ENCODE measurements at regions of chrX and their contacts with region 1.

Region 1: DNA sequence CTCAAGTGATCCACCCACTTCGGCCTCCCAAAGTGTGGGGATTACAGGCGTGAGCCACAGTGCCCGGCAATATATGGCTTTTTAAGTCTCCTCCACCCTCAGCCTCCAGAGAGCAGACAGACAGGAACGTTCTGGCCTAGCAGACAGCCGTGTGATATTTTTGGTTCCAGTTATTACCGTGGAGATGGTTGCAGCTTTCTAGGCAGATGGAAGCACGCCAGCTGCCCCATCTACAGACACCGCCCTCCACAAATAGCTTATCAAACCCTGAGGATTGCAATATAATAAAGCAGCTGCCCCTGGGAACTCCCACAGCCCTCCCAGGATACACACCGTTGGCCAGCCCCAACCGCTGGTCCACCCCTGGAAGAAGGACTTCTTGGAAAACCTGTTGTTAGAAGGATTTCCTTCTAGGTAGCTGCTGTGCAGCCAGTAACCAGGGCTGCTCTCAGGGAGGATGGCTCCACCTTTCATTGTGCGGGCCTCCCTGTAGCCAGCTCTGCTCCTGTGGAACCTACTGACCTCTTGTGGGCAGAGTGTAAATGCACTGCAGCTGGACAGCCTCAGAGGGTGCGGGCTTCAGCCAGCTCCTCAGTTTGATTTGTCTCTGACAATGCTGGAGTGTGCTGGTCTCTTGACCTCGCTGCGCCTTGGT is 44.0 kb downstream of the SLC25A5 start:
- DNase-seq: peak in 1 of 2 experiments; percentile 47
- H3K4me3 ChIP-seq: no peak overlapping the region
- H3K27ac ChIP-seq: no peak overlapping the region
- H3K4me1 ChIP-seq: no peaks in the 10 kb centered on the region
- H3K27me3 ChIP-seq: no peaks in the 10 kb centered on the region
- CTCF ChIP-seq: peak; percentile 71 to 83 (median 80)
- EP300 ChIP-seq: no peak
- POLR2A ChIP-seq: no peak
- RAD21 ChIP-seq: peak; percentile 81 to 88

Region 2: DNA sequence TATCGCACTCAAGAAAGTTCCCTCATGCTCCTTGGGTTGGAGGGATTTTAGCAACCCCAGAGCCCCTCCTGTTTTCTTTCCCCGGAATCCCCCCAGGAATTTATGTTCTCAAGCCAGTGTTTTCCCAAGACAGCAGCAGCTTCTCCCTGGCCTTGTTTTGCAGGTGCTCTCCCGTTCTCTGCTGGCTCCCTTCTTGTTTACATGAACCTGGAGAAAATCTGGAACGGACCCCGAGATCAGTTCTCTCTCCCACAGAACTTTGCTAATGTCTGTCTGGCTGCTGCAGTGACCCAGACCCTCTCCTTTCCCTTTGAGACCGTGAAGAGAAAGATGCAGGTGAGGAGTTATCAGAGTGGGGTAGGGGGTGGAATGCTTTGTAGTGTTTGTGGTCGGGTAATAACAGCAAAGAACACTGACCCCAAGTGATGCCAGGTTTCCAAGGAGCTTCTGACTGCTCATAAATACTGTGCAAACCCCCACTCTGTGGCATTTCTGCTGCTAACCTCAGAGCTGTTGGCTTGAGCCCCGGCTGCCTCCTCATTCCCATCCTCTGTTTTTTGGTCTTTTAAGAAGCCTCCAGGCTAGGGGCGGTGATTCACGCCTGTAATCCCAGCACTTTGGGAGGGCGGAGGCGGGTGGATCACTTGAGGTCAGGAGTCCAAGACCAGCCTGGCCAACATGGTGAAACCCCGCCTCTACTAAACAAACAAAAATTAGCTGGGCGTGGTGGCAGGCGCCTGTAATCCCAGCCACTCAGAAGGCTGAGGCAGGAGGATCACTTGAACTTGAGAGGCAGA is 102.0 kb before region 1 on chrX:
- CTCF ChIA-PET with region 1: no interaction called
- POLR2A ChIA-PET with region 1: no interaction called
- DNase-seq: no peak
- H3K4me3 ChIP-seq: no peak overlapping the region
- H3K27ac ChIP-seq: no peak overlapping the region
- H3K4me1 ChIP-seq: no peaks in the 10 kb centered on the region
- H3K27me3 ChIP-seq: no peaks in the 10 kb centered on the region
- CTCF ChIP-seq: no peak
- EP300 ChIP-seq: no peak
- POLR2A ChIP-seq: no peak
- RAD21 ChIP-seq: no peak

Region 3: GRCh38 chrX:119455264-119455663 is 57.0 kb before region 1 on chrX:
- CTCF ChIA-PET with region 1: no interaction called
- POLR2A ChIA-PET with region 1: no interaction called
- DNase-seq: no peak
- H3K4me3 ChIP-seq: no peak overlapping the region
- H3K27ac ChIP-seq: no peak overlapping the region
- H3K4me1 ChIP-seq: no peaks in the 10 kb centered on the region
- H3K27me3 ChIP-seq: no peaks in the 10 kb centered on the region
- CTCF ChIP-seq: no peak
- EP300 ChIP-seq: no peak
- POLR2A ChIP-seq: no peak
- RAD21 ChIP-seq: no peak

Region 4: DNA sequence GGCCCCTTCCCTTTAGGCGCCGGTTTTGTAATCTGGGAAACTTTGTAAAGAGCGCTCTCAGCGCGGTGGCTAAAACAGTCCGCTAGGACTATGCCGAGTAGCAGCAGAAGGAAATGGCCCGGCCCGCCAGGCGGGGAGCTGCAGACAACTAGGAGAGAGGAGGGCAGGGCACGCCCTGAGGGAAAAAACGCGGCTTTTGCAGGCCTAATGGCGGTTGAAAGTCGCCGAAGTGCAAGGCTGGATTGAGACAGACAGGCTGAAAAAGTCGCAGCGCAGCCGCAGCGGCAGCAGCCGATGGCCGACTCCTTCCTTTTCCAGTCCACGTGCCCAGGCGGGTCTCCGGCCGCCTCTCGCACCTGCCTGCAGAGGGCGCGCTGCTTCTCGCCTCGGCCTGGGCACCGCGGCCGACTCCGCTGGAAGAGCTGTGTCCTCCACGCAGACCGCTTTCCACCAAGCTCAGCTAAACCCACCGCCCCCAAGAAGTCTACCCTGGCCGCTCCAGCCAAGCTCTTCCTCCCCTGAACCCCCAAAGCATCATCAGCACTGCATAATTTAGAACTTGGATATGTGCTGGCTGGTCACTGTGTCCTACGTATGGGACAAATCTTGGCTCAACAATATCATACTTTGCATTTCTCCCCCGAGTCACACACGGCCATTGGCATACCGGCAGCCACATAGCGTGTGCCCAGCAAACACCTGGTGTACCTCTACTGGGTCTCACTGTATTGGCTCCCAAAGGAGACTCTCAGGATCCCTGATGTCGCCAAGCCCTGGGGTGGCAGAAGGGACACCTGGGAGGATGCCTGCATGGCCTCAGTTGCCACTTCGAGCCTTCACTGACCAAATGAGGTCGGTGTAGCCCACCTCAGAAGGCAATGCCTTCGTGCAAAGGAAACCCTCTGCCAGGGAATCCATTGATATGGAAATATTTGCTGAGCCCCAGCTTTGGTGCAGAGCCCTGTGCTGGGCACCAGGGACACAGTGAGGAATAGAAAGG is 29.5 kb before region 1 on chrX:
- CTCF ChIA-PET with region 1: interaction called, 34 read pairs
- POLR2A ChIA-PET with region 1: interaction called, 5 read pairs
- DNase-seq: peak in 1 of 2 experiments; percentile 78
- H3K4me3 ChIP-seq: peak overlapping the region; percentile 14 to 56 (median 26); a peak in 5 of 8 replicates
- H3K27ac ChIP-seq: no peak overlapping the region
- H3K4me1 ChIP-seq: no peaks in the 10 kb centered on the region; a peak in 1 of 7 replicates
- H3K27me3 ChIP-seq: peaks cover 0 to 10% (median 2%) of the 10 kb centered on the region in 4 experiments; a peak in 1 of 7 replicates
- CTCF ChIP-seq: peak; percentile 61 to 80 (median 74)
- EP300 ChIP-seq: no peak
- POLR2A ChIP-seq: peak in 1 of 2 experiments; percentile 43; a peak in 1 of 3 replicates
- RAD21 ChIP-seq: peak; percentile 30 to 44; a peak in 3 of 4 replicates

Region 5: DNA sequence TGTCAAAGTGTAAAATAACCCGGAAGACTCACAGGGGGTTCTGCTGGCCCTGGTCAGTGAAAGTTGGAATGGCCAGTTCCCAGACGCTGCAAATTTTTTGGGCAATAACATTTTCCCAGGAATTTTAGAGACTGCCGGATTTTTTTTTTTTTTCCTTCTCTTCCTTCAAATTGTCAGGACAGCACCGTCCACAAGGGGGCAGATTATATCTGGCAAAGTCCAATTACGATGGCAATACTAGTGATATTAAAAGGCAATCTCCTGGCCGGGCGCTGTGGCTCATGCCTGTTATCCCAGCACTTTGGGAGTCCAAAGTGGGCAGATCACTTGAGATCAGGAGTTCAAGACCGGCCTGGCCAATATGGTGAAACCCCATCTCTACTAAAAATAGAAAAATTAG is 23.5 kb before region 1 on chrX:
- CTCF ChIA-PET with region 1: interaction called, 34 read pairs
- POLR2A ChIA-PET with region 1: no interaction called
- DNase-seq: peak in 1 of 2 experiments; percentile 56
- H3K4me3 ChIP-seq: no peak overlapping the region
- H3K27ac ChIP-seq: no peak overlapping the region
- H3K4me1 ChIP-seq: no peaks in the 10 kb centered on the region
- H3K27me3 ChIP-seq: no peaks in the 10 kb centered on the region
- CTCF ChIP-seq: peak in 2 of 3 experiments; percentile 39 to 46; a peak in 3 of 4 replicates
- EP300 ChIP-seq: no peak
- POLR2A ChIP-seq: no peak
- RAD21 ChIP-seq: peak; percentile 29 to 53; a peak in 3 of 4 replicates

Region 6: GRCh38 chrX:119495734-119496726 is 16.2 kb before region 1 on chrX:
- CTCF ChIA-PET with region 1: interaction called, 34 read pairs
- POLR2A ChIA-PET with region 1: no interaction called
- DNase-seq: no peak
- H3K4me3 ChIP-seq: no peak overlapping the region
- H3K27ac ChIP-seq: no peak overlapping the region
- H3K4me1 ChIP-seq: no peaks in the 10 kb centered on the region
- H3K27me3 ChIP-seq: no peaks in the 10 kb centered on the region
- CTCF ChIP-seq: no peak
- EP300 ChIP-seq: no peak
- POLR2A ChIP-seq: no peak
- RAD21 ChIP-seq: no peak

Measured in H1 (cell line).